Dorsolateral prefrontal cortex (tissue), 120 donors: ENCODE measurements at regions of chr10 and their contacts with region 1.

Region 1: DNA sequence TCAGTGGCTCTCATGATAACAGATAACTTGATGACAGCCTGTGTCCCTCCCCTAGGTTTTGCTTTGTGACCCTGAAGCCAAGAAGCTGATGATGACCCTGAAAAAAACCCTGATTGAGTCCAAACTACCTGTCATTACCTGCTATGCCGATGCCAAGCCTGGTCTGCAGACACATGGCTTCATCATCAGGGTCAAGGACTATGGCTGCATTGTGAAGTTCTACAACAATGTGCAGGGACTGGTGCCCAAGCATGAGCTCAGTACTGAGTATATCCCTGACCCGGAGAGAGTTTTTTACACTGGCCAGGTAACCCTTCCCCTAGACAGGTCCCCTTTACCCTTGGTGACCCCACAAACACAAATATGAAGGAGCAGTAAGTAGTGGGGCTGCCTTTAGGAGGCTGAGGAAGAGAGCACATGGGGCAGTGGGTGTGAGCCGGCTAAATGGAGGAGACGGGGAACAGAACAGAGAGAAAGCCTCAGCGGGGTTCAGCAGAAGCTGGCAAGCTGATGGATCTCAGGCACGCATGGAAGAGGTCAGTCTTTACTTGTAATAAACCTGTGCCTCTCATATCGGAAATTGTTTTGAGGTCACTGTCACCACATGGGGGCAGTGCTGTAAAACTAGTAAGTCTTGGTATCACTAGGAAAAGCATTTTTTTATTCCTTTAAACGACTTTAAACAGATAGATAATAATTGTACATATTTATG is 20.2 kb downstream of the PDCD11 start:
- DNase-seq: peak in 5 of 10 donors; percentile 44 to 79 (median 61)
- H3K4me3 ChIP-seq: no peak overlapping the region
- H3K27ac ChIP-seq: peak overlapping the region in 1 of 59 donors; percentile 46
- H3K27me3 ChIP-seq: no peaks in the 10 kb centered on the region
- CTCF ChIP-seq: peak; percentile 47 to 89 (median 72)

Region 2: DNA sequence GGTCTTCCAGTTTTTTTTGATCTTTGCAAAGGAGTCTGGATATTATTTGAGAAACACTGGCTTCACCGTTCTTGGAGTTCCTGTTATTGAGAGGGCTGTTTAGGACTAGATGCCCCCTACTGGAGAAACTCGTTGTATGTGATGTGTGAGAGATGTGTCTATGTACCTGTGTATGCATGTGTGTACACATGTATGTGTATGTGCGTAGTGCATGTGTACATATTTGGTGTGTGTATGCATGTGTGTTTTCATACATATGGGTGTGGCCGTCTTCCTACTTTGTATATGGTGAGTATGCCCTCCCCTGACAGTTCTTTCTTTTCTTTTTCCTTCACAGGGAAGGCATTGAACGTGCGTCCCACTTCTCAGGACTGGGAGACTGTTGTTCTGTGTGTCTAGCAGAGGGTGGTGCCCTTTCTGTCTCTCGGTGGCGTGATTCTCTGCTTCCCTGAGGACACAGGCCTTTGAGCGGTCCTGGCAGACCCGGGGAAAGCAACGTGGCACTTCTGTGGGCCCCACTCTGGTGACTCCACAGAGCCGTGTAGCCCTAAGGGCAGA is 65.5 kb after region 1 on chr10:
- intact Hi-C with region 1: loop called (anchors 5 kb)
- DNase-seq: no peak
- H3K4me3 ChIP-seq: no peak overlapping the region
- H3K27ac ChIP-seq: no peak overlapping the region
- H3K27me3 ChIP-seq: no peaks in the 10 kb centered on the region
- CTCF ChIP-seq: peak; percentile 25 to 72 (median 57)

Region 3: DNA sequence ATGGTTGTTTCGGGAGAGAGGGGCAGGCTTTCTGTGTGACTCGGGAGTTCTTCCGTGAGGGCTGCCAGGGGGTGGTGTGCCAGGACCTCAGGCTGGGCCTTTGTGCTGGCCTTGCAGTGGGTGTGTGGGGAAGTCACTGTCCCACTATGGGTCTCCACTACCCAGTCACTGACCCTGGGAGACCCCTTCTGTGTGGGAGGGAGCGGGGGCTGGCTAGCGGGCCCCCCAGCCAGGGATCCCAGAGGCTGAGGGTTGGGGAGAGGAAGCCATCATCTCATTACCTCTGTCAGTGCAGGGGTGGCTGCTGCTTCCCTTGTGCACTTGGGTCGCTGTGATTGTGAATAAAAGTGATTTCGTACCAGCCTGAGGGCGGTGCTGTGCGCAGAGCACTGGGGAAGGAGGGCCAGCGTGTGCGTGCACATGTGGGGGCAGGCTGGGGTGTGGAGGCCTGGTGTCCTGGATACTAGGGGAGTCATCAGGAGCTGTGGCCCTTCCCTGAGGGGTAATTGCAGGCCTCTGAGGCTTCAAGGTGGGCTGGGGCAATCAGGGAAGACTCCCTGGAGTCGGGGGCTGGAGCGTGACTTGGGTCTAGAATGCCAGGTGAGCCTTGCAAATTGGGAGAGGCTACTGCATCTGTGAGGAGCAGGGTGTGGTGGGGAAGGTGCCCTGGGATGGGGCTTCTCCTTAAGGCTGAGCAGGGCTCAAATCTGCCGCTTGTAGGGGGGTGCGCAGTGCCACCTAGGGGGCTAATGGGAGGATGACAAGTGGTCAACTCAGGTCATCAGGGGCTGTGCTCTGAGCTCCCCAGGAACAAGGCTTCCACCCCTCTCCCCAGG is 175.8 kb after region 1 on chr10:
- intact Hi-C with region 1: loop called (anchors 5 to 10 kb)
- DNase-seq: peak in 3 of 10 donors; percentile 38 to 68 (median 58)
- H3K4me3 ChIP-seq: no peak overlapping the region
- H3K27ac ChIP-seq: peak overlapping the region in 10 of 59 donors; percentile 1 to 62 (median 25)
- H3K27me3 ChIP-seq: no peaks in the 10 kb centered on the region
- CTCF ChIP-seq: peak in 55 of 56 donors; percentile 23 to 72 (median 54)

Region 4: GRCh38 chr10:103685880-103686669 is 269.5 kb after region 1 on chr10:
- intact Hi-C with region 1: loop called in 1 of 2 experiments (anchors 5 kb)
- DNase-seq: peak; percentile 72 to 89 (median 86)
- H3K4me3 ChIP-seq: peak overlapping the region in 2 of 59 donors; percentile 2 to 8
- H3K27ac ChIP-seq: peak overlapping the region in 46 of 59 donors; percentile 0 to 78 (median 58)
- H3K27me3 ChIP-seq: no peaks in the 10 kb centered on the region
- CTCF ChIP-seq: peak; percentile 88 to 99 (median 97)

Region 5: DNA sequence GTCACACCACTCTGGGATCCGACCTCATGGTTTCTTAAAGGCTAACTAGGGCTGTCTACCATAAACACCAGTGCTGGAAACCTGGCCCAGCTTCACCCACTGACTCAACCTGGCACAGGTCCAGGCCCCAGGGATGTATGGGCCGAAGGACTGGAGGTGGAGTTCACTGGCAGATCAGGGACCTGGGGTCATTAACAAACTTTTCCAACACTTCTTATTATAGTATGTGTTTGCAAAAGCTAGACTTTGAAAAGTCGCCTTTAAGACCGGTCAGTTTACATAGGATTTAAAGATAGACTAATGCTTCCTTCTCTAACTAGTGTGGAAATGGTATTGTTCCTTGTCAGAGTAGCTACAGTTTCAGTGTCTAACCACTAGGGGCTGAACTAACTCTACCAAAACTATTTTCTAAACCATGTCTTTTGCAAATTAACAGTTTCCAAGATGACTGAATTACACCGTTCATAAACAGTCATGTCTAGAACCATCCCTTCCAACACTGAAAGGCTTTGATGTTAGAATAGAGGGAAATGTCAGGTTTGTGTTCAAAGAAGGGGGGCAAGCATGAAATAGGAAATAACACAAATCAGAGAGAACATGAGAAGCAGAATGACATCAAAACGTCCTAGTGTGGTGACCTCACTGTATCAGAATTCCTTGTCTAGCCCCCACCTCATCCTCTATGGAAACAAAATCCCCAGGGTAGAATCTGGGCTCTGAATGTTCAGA is 471.7 kb after region 1 on chr10:
- intact Hi-C with region 1: loop called in 1 of 2 experiments (anchors 10 kb)
- DNase-seq: peak in 1 of 10 donors; percentile 16
- H3K4me3 ChIP-seq: no peak overlapping the region
- H3K27ac ChIP-seq: peak overlapping the region in 44 of 59 donors; percentile 8 to 81 (median 58)
- H3K27me3 ChIP-seq: no peaks in the 10 kb centered on the region
- CTCF ChIP-seq: peak; percentile 61 to 95 (median 86)